Activated naive CD4-positive, alpha-beta T cell treated with anti-CD3 and anti-CD28 coated beads for 36 hours (primary cell): ENCODE measurements at regions of chr12 and their contacts with region 1.

Region 1: GRCh38 chr12:46233423-46233822 is 35.4 kb downstream of the SLC38A1 start:
- DNase-seq: no peak
- H3K4me3 Mint-ChIP-seq: no peak overlapping the region
- H3K27ac Mint-ChIP-seq: peak overlapping the region; percentile 68
- H3K4me1 Mint-ChIP-seq: peaks cover 73% of the 10 kb centered on the region
- H3K27me3 Mint-ChIP-seq: no peaks in the 10 kb centered on the region

Region 2: DNA sequence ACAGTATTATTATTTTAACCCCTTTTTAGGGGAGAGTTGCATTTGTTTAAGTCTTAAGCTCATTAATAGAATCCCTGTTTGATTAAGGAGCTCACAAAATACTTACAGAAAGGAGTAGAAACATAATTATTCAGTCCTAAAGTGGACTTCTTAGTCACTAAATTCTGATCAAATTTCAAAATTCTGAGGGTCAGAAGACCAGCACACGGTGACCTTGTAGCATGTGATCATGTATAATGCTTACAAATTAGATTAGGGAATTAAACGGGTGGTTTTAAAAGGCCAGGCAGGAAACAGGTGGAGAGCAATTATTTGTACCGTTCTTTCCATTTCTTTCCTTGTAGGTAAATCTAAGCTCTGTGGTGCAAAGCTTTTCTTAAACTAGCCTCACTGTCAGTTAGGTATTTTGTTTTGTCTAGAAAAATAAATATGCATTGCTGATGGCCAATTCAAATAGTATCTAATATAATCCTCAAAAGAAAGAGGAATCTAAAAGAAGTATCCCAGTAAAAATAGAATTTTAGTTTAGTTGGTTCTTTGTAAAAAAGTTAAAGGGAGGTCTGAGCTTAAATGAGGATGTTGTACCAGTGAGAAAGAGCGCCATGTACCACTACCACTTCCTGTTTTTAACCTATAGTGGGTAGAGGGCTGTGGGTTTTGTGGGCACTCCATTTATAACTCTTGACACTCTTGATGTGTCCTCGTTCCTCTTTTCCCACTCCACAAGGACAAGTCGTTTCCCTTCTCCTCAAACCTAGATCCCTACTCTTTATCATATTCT is 15.7 kb before region 1 on chr12:
- CTCF ChIA-PET with region 1: interaction called, 3 read pairs
- intact Hi-C with region 1: loop called (anchors 1 kb)
- DNase-seq: peak; percentile 74
- H3K4me3 Mint-ChIP-seq: peak overlapping the region; percentile 33
- H3K27ac Mint-ChIP-seq: peak overlapping the region; percentile 100
- H3K4me1 Mint-ChIP-seq: peaks cover 95% of the 10 kb centered on the region
- H3K27me3 Mint-ChIP-seq: no peaks in the 10 kb centered on the region

Region 3: GRCh38 chr12:46246021-46246700 is 12.7 kb after region 1 on chr12:
- CTCF ChIA-PET with region 1: no interaction called
- intact Hi-C with region 1: loop called (anchors 1 kb)
- DNase-seq: no peak
- H3K4me3 Mint-ChIP-seq: no peak overlapping the region
- H3K27ac Mint-ChIP-seq: peak overlapping the region; percentile 76
- H3K4me1 Mint-ChIP-seq: peaks cover 89% of the 10 kb centered on the region
- H3K27me3 Mint-ChIP-seq: no peaks in the 10 kb centered on the region

Region 4: GRCh38 chr12:46253544-46254162 is 20.2 kb after region 1 on chr12:
- CTCF ChIA-PET with region 1: no interaction called
- intact Hi-C with region 1: loop called (anchors 2 kb)
- DNase-seq: no peak
- H3K4me3 Mint-ChIP-seq: no peak overlapping the region
- H3K27ac Mint-ChIP-seq: peak overlapping the region; percentile 34
- H3K4me1 Mint-ChIP-seq: peaks cover 78% of the 10 kb centered on the region
- H3K27me3 Mint-ChIP-seq: no peaks in the 10 kb centered on the region